Endothelial cell of umbilical vein (primary cell): ENCODE measurements at regions of chr1 and their contacts with region 1.

Region 1: DNA sequence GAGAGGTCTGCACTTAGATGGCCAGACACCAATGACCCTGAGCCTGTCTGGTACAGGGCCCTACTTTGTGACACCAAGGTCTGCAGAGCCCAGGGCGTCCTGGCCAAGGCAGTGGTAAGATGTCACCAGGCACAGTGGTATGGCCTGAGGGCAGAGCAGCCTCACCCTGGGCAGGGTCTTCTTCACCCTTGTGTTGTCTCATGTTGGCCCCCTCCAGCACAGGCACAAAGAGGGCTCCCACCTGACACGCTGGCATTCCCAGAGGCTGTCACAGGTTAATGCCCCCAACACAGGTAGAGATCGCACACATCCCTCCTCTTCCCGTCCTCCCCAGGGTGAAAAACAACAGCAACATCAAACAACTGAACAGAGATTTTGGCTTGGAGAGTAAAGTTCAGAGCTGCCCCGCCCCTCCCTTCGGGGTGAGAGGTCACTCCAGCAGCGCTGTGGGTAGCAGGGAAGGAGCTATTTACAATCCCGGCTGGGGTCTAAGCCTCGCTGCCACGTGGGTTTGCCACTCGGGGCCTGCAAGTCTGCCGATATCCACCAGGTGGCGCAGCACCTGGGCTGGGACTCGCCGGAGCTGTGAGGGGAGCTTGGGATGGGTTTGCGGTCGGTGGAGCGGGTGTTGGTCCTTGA is 12.6 kb downstream of the EFNA3 start:
- DNase-seq: peak; percentile 77
- H3K4me3 ChIP-seq: no peak overlapping the region
- H3K27ac ChIP-seq: no peak overlapping the region
- H3K4me1 ChIP-seq: no peaks in the 10 kb centered on the region
- H3K27me3 ChIP-seq: peaks cover 4 to 16% of the 10 kb centered on the region in 2 experiments
- CTCF ChIP-seq: peak; percentile 94 to 99
- POLR2A ChIP-seq: no peak

Region 2: GRCh38 chr1:155117617-155118016 is 26.4 kb after region 1 on chr1:
- CTCF ChIA-PET with region 1: interaction called, 97 read pairs
- POLR2A ChIA-PET with region 1: no interaction called
- dilution Hi-C with region 1: no loop called
- intact Hi-C with region 1: no loop called
- DNase-seq: no peak
- H3K4me3 ChIP-seq: no peak overlapping the region
- H3K27ac ChIP-seq: no peak overlapping the region
- H3K4me1 ChIP-seq: no peaks in the 10 kb centered on the region
- H3K27me3 ChIP-seq: peaks cover 0 to 4% of the 10 kb centered on the region in 2 experiments
- CTCF ChIP-seq: no peak
- POLR2A ChIP-seq: no peak

Region 3: DNA sequence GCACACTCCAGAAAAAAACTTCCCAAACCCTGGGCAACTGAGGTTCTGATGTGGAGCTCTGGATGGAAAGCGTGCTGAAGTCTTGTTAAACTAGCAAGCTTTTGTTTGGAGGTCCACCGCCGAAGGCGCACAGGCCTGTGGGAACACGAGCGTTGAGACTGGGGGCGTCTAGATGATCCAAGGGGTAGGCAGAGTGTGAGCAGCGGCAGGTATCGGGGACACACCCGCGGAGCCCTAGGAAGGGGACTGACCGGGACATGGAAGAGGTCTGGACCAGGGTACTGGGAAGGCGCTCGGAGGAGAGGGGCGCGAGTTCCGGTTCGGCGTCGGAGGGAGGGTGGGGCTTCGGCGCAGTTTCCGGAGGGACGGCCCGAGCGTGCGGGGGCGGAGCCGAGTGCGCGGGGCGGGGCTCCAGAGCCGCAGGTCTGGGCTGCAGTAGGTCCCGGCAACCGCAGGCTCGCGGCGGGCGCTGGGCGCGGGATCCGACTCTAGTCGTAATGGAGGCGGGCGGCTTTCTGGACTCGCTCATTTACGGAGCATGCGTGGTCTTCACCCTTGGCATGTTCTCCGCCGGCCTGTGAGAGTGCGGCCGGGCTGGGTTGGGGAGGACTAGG is 44.3 kb after region 1 on chr1 and contains the start of gene SLC50A1:
- CTCF ChIA-PET with region 1: interaction called, 97 read pairs
- POLR2A ChIA-PET with region 1: no interaction called
- dilution Hi-C with region 1: no loop called
- intact Hi-C with region 1: loop called (anchors 1 kb)
- DNase-seq: peak; percentile 97
- H3K4me3 ChIP-seq: peak within 1 kb of the TSS; percentile 21 to 62 (median 53)
- H3K27ac ChIP-seq: peak within 1 kb of the TSS; percentile 98
- H3K4me1 ChIP-seq: peaks cover 49% of the 10 kb centered on the region
- H3K27me3 ChIP-seq: no peaks in the 10 kb centered on the region
- CTCF ChIP-seq: peak in 1 of 2 donors; percentile 32
- POLR2A ChIP-seq: peak; percentile 93
- total RNA-seq, gene SLC50A1: 29.5 and 30.8 TPM in 2 replicates

Region 4: GRCh38 chr1:155167166-155168104 is 76.2 kb after region 1 on chr1:
- CTCF ChIA-PET with region 1: interaction called, 673 read pairs
- POLR2A ChIA-PET with region 1: interaction called, 5 read pairs
- dilution Hi-C with region 1: no loop called
- intact Hi-C with region 1: loop called (anchors 1 kb)
- DNase-seq: peak; percentile 91
- H3K4me3 ChIP-seq: peak overlapping the region in 1 of 3 experiments; percentile 9
- H3K27ac ChIP-seq: peak overlapping the region; percentile 45
- H3K4me1 ChIP-seq: peaks cover 22% of the 10 kb centered on the region
- H3K27me3 ChIP-seq: no peaks in the 10 kb centered on the region
- CTCF ChIP-seq: peak; percentile 88 to 90
- POLR2A ChIP-seq: no peak

Region 5: DNA sequence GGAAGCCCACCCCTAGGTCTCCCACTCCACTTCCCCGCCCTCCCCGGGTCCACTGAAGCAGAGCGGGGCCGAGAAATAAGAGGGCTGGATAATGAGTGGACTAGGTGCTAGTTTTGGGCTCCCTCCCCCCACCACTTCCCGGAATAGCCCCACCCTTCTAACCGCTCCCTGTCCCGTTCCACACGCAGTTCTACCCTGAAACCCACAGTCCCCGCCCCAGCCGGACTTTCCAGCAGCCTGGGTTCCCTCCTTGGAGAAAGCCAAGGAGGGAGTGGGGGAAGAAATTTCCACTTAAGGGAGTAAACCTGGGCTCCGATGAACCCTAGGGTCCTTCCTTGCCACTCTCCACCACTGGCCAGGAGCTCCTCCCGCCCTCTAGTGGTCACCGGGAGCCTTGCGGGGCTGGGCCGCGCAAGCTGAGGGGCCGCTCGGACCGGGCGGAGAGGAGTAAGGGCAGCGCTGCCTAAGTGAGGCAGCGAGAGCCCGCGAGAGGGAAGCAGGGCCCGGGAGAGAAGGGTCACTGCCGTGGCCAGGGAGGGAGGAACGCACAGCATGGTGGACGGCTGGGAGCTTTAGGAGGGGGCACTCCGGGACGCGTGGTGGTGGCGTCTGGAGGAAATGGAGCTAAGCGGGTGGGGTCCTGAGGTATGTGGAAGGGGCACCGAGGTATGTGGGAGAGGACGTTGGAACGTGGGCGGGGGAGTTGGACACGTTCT is 102.2 kb after region 1 on chr1:
- CTCF ChIA-PET with region 1: interaction called, 13 read pairs
- POLR2A ChIA-PET with region 1: no interaction called
- dilution Hi-C with region 1: no loop called
- intact Hi-C with region 1: no loop called
- DNase-seq: peak; percentile 91
- H3K4me3 ChIP-seq: peak overlapping the region; percentile 30 to 37 (median 31)
- H3K27ac ChIP-seq: peak overlapping the region; percentile 1
- H3K4me1 ChIP-seq: peaks cover 13% of the 10 kb centered on the region
- H3K27me3 ChIP-seq: no peaks in the 10 kb centered on the region
- CTCF ChIP-seq: peak; percentile 98 to 99
- POLR2A ChIP-seq: peak; percentile 30

Region 6: DNA sequence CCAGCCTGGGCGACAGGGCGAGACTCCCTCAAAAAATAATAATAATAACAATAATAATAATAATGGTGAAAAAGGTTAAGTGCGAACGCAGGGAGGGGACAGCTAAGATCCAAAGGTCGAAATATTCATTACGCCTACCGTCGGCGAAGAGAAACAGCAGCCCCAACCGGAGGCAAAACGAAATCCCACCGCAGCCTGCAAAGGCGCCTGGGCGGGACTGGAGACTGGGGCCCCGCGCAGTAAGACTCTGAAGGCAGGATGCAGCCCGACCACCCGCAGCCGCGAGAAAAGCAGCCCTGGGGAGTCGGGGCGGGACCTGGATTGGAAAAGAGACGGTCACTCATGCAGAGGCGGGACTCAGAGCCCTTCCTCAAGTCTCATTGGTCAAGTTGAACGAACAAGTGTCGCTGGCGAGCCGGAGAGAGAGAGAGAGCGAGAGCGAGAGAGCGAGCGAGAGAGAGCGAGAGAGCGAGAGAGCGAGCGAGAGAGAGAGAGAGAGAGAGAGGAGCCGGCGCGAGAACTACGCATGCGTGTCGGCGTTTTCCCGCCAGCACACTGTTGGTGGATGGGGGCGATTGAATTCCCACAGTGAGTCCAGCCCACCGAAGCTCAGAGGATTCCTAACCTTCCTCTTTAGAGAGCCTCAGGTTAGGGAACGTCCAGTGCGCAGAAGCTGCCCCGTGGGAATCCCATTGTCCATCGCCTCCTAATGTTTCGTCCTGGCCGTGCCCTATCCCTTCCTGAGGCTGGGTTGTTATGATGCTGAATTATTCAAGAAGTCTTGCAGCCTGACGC is 153.4 kb after region 1 on chr1:
- CTCF ChIA-PET with region 1: no interaction called
- POLR2A ChIA-PET with region 1: no interaction called
- dilution Hi-C with region 1: no loop called
- intact Hi-C with region 1: no loop called
- DNase-seq: peak; percentile 99
- H3K4me3 ChIP-seq: peak overlapping the region; percentile 48 to 61 (median 60)
- H3K27ac ChIP-seq: peak overlapping the region; percentile 41
- H3K4me1 ChIP-seq: peaks cover 16% of the 10 kb centered on the region
- H3K27me3 ChIP-seq: no peaks in the 10 kb centered on the region
- CTCF ChIP-seq: peak; percentile 8 to 17
- POLR2A ChIP-seq: peak; percentile 99